Activated naive CD4-positive, alpha-beta T cell treated with anti-CD3 and anti-CD28 coated beads for 36 hours (primary cell): ENCODE measurements at regions of chr17 and their contacts with region 1.

Region 1: GRCh38 chr17:39450847-39451581 is at the start of gene MED1:
- DNase-seq: peak; percentile 96
- H3K4me3 Mint-ChIP-seq: peak within 1 kb of the TSS; percentile 95
- H3K27ac Mint-ChIP-seq: peak within 1 kb of the TSS; percentile 95
- H3K4me1 Mint-ChIP-seq: peaks cover 42% of the 10 kb centered on the region
- H3K27me3 Mint-ChIP-seq: no peaks in the 10 kb centered on the region
- total RNA-seq, gene MED1: 52.4 to 56.1 TPM

Region 2: DNA sequence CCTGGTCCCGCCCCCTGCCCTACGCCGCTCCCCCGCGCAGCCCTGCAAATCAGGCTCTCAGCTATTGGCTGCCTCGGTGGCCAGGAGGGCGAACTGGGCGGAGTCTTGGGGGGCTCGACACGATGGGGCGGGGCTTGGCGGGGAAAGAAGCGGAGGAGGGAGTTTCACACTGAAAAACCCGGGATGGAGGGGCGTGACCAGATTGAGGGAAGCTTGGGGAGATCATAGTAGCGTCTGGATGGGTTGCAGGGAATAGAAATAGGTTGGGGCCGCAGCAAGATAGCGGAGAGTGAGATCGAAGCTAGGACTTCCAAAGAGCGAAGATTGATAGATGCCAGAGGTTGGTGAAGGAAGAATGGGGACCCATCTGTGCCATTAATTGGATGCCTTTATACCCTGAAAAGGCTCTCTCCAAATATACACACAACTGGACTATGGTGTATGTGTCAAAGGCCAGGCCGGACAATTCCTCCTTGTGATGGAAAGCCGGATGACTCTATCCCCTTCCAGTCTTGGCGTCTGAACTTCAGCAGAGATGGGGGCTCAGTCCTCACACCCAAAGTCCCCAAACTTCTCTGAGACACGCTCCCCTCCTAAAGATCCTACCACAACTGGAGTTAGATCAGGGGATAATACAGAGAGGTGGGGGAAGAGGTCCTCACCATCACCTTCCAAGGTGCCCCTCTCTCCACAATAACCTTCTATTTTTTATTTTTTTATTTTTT is 224.9 kb before region 1 on chr17:
- CTCF ChIA-PET with region 1: no interaction called
- intact Hi-C with region 1: no loop called
- DNase-seq: peak; percentile 28
- H3K4me3 Mint-ChIP-seq: peak overlapping the region; percentile 33
- H3K27ac Mint-ChIP-seq: no peak overlapping the region
- H3K4me1 Mint-ChIP-seq: peaks cover 6% of the 10 kb centered on the region
- H3K27me3 Mint-ChIP-seq: peaks cover 37% of the 10 kb centered on the region

Region 3: DNA sequence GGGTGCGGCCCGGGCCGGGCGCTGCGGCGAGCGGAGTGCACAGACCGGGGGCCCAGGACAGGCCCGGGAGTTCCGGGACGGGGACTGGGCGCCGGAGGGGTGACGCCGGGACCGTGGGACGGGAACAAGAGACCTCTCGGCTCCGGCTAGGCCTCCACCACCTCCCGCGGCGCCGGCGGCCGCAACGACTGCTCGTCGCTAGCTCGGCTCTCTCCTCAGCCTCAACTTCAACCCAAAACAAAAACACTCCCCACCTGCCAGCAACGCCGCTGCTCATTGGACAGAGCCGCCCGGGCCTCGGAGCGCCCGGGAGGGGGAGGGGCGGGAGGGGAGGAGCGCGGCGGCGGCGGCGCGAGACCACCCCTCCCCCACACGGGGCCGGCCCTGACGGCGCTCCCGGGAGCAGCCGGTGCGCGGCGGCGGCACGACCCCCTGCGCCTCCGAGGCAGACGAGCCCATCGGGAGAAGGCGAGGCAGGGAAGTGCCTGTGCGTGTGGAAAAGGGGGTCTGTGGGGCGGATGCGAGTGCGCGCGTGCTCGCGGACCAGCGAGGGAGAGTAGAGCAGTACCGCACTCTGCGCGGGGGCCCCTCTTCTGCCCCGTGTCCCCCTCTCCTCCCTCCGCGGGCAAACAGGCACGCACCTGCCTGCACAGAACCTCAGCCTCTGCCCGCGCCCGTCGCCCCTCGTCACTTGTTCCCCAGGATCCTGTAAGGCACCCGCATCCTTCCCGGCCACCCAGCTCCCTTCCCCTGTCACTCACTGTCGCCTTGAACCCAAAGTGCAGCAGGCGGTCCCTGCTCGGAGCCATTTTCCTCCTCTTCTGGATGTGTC is 49.4 kb before region 1 on chr17 and contains the start of gene FBXL20:
- CTCF ChIA-PET with region 1: no interaction called
- intact Hi-C with region 1: loop called (anchors 1 kb)
- DNase-seq: peak; percentile 96
- H3K4me3 Mint-ChIP-seq: peak within 1 kb of the TSS; percentile 91
- H3K27ac Mint-ChIP-seq: peak within 1 kb of the TSS; percentile 90
- H3K4me1 Mint-ChIP-seq: peaks cover 61% of the 10 kb centered on the region
- H3K27me3 Mint-ChIP-seq: no peaks in the 10 kb centered on the region
- total RNA-seq, gene FBXL20: 14.2 to 15.4 TPM